Ascending aorta (tissue), 2 donors: ENCODE measurements at regions of chr16 and their contacts with region 1.

Region 1: DNA sequence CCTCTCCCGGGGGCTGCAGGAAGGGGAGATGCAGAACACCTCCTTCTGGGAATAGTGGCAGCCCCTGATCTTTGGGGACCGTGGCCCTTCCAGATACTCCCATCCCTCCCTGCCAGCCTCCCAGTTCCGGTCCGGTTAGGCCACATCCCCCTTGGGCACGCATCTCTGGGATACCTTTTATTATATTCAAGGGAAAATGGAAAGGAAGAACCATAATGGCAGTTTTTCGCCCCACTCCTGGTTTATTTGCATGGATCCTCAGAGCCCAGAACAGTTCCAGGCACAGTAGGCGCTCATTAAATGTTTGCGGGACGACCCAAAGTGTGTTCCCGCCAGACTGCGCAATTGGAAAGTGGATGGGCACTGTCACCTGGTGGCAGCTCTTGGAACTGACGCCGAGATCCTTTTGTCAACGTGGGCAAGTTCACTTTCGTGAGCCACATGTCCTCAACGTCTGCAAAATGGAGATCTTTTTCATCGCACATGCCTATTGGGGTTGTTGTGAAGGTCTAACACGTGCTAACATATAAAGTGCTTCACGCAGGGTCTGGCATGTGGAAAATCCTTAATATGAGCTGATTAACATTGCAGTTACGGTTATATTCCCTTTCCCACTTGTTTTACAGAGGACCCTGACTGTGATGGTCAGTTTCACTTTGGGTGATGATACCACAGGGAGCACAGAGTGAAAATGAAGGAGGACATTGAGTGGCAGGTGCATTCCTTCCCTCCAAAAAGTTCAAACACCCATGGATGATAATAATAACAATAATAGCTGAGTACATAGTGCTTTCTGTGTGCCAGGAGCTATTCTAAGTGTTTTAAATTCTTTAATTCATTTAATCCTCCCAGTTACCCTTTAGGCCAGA is 1.7 kb upstream of the GPRC5B start:
- DNase-seq: peak in 1 of 2 donors; percentile 87
- H3K4me3 ChIP-seq: peak overlapping the region; percentile 73 to 91
- H3K27ac ChIP-seq: no peak overlapping the region
- H3K4me1 ChIP-seq: peaks cover 0 to 5% of the 10 kb centered on the region in 2 donors
- H3K27me3 ChIP-seq: no peaks in the 10 kb centered on the region
- CTCF ChIP-seq: peak; percentile 96 to 100 (median 99)

Region 2: DNA sequence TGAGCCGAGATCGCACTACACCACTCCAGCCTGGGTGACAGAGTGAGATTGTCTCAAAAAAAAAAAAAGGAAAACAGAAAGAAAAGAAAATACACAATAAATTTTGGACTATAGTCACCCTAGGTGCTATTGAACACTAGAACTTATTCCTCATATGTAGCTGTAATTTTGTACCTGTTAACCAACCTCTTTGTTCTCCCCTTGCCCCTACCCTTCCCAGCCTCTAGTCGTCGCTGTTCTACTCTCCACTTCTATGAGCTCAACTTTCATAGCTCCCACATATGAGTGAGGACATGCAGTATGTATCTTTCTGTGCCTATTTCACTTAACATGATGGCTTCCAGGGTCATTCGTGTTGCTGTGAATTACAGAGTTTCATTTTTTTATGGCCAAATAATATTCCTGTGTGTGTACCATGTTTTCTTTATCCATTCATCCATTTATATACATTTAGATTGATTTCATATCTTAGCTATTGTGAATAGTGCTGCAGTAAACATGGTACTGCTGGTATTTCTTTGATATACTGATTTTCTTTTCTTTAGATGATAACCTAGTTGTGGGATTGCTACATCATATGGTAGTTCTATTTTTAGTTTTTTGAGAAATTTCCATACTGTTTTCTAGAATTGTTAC is 302.5 kb before region 1 on chr16:
- intact Hi-C with region 1: loop called (anchors 5 kb)
- DNase-seq: no peak
- H3K4me3 ChIP-seq: no peak overlapping the region
- H3K27ac ChIP-seq: no peak overlapping the region
- H3K4me1 ChIP-seq: no peaks in the 10 kb centered on the region
- H3K27me3 ChIP-seq: no peaks in the 10 kb centered on the region
- CTCF ChIP-seq: peak; percentile 52 to 79 (median 78)

Region 3: DNA sequence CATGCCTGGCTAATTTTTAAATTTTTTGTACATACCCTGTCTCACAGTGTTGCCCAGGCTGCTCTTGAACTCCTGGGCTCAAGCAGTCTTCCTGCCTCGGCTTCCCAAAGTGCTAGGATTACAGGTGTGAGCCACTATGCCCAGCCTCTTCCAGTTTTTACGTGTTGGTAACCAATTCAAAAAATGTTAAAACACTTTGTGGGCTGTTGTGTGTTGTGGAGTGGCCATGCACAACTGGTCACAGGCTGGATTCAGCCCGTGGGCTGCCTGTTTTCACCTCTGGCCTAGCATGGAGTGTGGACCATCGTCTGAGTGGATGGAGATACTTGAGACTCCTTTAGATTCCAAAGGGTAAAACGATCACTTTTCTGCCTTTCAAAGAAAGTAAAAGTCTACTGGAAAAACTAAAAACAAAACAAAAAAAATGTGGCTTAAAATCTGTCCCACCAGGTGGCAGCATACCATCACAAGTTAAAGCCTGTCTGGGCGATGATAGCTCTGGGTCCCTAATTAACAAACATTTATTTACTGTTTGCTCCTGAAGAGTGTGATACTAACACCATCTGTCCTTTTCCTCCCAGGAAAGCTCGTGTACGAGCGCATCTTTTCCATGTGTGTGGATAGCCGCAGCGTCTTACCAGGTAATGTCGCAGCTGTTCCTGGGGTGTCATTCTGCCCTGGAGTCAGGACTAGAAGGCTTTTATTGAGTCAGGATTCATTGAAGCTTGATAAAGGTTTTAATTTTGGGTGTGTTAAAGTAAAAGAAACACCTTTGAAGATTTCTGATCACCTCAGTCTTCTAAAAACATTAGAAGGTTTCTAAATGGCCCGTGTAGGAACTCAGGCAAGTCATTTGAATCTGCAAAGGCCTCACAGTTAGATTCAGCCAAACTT is 285.0 kb before region 1 on chr16:
- intact Hi-C with region 1: loop called (anchors 1 kb)
- DNase-seq: no peak
- H3K4me3 ChIP-seq: no peak overlapping the region
- H3K27ac ChIP-seq: no peak overlapping the region
- H3K4me1 ChIP-seq: no peaks in the 10 kb centered on the region
- H3K27me3 ChIP-seq: no peaks in the 10 kb centered on the region
- CTCF ChIP-seq: peak; percentile 39 to 65 (median 50)

Region 4: GRCh38 chr16:19737306-19738038 is 148.8 kb before region 1 on chr16:
- intact Hi-C with region 1: no loop called
- DNase-seq: peak in 1 of 2 donors; percentile 40
- H3K4me3 ChIP-seq: no peak overlapping the region
- H3K27ac ChIP-seq: no peak overlapping the region
- H3K4me1 ChIP-seq: peaks cover 0 to 5% of the 10 kb centered on the region in 2 donors
- H3K27me3 ChIP-seq: no peaks in the 10 kb centered on the region
- CTCF ChIP-seq: no peak

Region 5: DNA sequence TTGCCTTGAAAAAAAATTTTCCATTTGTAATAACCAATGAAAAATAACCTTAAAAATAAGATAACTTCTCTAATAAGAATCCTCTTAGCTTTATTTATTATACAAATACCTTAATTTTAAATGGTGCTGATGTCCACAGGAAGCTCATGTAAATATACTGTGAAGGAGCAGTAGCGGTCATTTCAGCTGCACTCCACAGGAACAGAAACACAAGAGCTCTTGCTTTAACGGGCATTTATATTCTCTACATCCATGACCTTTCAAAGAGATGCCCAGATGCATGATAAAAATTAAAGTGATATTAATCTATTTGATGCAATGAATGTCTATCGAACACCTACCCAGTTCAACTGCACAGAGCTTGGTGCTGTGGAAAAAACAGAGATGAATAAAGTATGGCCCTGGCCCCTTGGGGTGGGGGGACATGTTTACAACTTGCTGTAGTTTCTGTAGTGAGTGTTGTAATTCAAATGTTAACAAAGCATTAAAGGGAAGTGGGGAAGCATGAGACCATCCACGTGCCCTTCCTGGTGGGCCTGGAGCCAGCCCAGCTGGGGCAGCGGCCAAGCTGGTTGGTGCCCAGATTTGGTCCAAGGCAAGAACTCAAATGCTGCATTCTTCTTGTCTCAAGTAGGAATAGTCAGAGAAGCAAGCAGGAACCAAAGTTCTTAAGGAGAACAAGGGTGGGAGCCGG is 120.3 kb before region 1 on chr16:
- intact Hi-C with region 1: loop called (anchors 5 kb)
- DNase-seq: peak; percentile 28 to 70
- H3K4me3 ChIP-seq: no peak overlapping the region
- H3K27ac ChIP-seq: peak overlapping the region in 1 of 2 donors; percentile 47
- H3K4me1 ChIP-seq: peaks cover 0 to 4% of the 10 kb centered on the region in 2 donors
- H3K27me3 ChIP-seq: no peaks in the 10 kb centered on the region
- CTCF ChIP-seq: no peak

Region 6: DNA sequence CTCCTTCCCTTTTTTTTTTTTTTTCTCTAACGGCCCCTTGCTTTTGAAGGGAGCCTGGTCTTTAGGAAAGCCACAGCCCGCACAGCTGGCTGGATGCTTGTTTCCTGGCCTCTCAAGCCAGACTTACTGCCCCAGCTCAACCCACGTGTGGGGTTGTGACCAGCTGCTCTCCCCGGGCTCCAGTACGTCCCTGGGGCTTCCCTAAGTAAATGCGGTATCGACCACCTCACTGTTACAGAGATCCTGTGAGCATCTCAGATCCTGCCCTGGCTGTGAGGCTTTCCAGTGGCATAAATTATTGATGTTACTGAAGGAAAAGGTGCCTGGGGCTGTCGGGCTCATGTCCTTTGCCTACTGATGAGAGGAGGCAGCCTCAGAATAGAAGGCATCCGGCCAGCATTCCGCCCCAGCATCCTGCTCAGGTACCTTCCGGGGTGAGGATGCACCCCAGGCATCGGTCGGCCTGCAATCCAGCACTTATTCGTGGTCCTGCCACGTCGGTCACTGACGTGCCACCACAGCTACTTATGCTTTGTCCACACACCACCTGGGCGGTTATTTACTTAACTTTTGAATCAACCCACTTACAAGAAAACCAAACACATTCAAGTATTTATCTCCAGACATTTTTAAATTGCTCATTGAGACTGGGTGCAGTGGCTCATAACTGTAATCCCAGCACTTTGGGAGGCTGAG is 11.3 kb before region 1 on chr16:
- intact Hi-C with region 1: no loop called
- DNase-seq: no peak
- H3K4me3 ChIP-seq: no peak overlapping the region
- H3K27ac ChIP-seq: no peak overlapping the region
- H3K4me1 ChIP-seq: no peaks in the 10 kb centered on the region
- H3K27me3 ChIP-seq: no peaks in the 10 kb centered on the region
- CTCF ChIP-seq: no peak